ENCODE measurements at regions of chr5 and their contacts with region 1.

Region 1: DNA sequence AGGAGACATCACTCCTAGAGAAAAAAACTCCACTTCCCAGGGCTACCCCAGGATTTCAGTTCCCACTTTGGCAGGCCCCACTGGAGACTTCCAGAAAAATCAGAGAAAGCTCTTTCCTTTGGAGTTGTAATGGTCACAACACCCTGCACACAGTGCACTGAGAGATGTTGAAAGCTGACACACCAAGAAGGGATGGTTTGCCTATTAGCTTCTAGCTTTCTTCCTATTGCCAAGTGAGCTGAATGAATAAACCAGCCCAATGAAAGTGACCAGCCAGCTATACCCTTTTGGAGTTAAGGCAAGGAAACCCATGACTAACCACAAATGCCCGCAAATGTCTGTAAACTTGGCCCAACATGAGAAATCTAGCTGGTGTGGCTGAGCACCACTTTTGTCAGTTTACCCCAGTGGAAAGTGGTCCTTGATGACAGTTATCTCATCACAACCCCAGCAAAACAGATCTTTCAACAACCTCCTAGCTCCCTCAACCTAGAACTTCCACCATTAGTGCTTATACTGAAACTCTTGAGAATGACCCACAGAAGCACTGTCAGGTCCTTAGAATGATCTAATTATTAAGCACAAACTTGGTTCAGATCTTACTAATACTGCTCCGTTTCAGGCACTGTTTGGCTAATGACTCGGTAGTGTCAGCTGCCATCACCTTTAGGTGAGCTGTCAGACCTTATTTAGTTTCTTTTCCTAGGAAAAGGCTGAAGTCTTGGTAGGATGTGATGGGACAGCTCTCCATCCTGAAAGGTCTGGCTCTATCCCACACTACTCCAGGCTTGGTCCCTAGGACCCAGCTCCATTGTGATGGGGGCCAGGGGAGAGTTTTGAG is 11.2 kb downstream of the IRF1 start:
- DNase-seq: peak; percentile 9
- ATAC-seq: peak; percentile 5
- H3K4me3 Mint-ChIP-seq: no peak overlapping the region
- H3K27ac Mint-ChIP-seq: peak overlapping the region; percentile 35
- H3K4me1 Mint-ChIP-seq: peaks cover 73% of the 10 kb centered on the region
- H3K27me3 Mint-ChIP-seq: no peaks in the 10 kb centered on the region
- CTCF ChIP-seq: no peak

Region 2: GRCh38 chr5:132227485-132228240 is 251.7 kb before region 1 on chr5 and contains the start of gene P4HA2:
- CTCF ChIA-PET with region 1: no interaction called
- POLR2A ChIA-PET with region 1: no interaction called
- intact Hi-C with region 1: no loop called
- DNase-seq: peak; percentile 66
- ATAC-seq: peak; percentile 86
- H3K4me3 Mint-ChIP-seq: peak within 1 kb of the TSS; percentile 60
- H3K27ac Mint-ChIP-seq: no peak within 1 kb of the TSS
- H3K4me1 Mint-ChIP-seq: peaks cover 10% of the 10 kb centered on the region
- H3K27me3 Mint-ChIP-seq: peaks cover 27% of the 10 kb centered on the region
- CTCF ChIP-seq: no peak
- total RNA-seq, gene P4HA2: 17.3 to 18.6 TPM

Region 3: GRCh38 chr5:132369474-132370180 is 109.7 kb before region 1 on chr5 and contains the start of gene SLC22A5:
- CTCF ChIA-PET with region 1: no interaction called
- POLR2A ChIA-PET with region 1: interaction called, 10 read pairs
- intact Hi-C with region 1: no loop called
- DNase-seq: peak; percentile 73
- ATAC-seq: peak; percentile 96
- H3K4me3 Mint-ChIP-seq: peak within 1 kb of the TSS; percentile 82
- H3K27ac Mint-ChIP-seq: peak within 1 kb of the TSS; percentile 84
- H3K4me1 Mint-ChIP-seq: peaks cover 28% of the 10 kb centered on the region
- H3K27me3 Mint-ChIP-seq: no peaks in the 10 kb centered on the region
- CTCF ChIP-seq: no peak
- total RNA-seq, gene SLC22A5: 4.0 to 4.1 TPM